Natural killer cell (primary cell): ENCODE measurements at regions of chr3 and their contacts with region 1.

Region 1: DNA sequence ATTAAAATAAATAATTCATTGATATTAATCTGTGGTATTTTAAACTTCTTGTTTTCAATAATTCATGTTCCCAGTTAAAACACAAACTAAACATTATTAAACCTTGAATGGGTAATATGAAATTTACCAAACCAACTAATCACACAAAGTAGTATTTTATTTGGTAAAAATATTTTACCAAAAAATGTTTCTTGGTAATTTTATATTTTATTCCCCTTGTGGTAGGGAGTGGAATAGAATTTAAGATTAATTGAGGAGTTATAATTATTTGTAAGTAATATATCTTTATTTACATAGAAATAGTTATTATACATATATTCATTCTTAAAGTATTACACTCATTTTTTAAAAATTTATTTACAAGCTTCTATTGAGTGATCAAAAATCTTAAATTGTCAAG is 1350.9 kb downstream of the OTOL1 start:
- DNase-seq: no peak
- ATAC-seq: no peak
- H3K4me3 ChIP-seq: no peak overlapping the region
- H3K4me3 Mint-ChIP-seq: no peak overlapping the region
- H3K27ac ChIP-seq: no peak overlapping the region
- H3K27ac Mint-ChIP-seq: no peak overlapping the region
- H3K4me1 ChIP-seq: no peaks in the 10 kb centered on the region
- H3K4me1 Mint-ChIP-seq: no peaks in the 10 kb centered on the region
- H3K27me3 ChIP-seq: no peaks in the 10 kb centered on the region
- H3K27me3 Mint-ChIP-seq: no peaks in the 10 kb centered on the region
- CTCF ChIP-seq: no peak

Region 2: GRCh38 chr3:161475901-161476300 is 1371.6 kb before region 1 on chr3:
- intact Hi-C with region 1: no loop called
- DNase-seq: no peak
- ATAC-seq: no peak
- H3K4me3 ChIP-seq: no peak overlapping the region
- H3K4me3 Mint-ChIP-seq: no peak overlapping the region
- H3K27ac ChIP-seq: no peak overlapping the region
- H3K27ac Mint-ChIP-seq: no peak overlapping the region
- H3K4me1 ChIP-seq: no peaks in the 10 kb centered on the region
- H3K4me1 Mint-ChIP-seq: no peaks in the 10 kb centered on the region
- H3K27me3 ChIP-seq: peaks cover 4% of the 10 kb centered on the region
- H3K27me3 Mint-ChIP-seq: peaks cover 3 to 9% of the 10 kb centered on the region in 2 donors
- CTCF ChIP-seq: no peak

Region 3: DNA sequence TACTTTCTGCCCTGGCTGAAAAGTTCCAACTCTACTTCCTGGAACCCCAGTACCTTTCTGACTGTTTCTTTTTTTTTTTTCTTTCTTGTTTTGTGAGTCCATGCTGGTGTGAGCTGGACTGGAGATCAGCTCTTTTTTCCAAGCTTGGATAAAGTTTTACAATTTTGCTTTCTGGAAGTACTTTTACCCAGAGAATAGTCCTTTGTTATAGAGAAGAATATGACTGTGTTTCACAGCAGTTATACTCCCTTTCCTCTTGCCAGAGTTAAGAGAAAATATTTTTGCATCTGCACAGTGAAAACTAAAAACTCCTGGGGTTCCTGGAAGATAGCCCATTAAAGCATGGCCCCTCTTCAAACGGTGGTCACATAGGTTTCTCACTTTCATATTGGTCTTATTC is 250.3 kb before region 1 on chr3:
- intact Hi-C with region 1: no loop called
- DNase-seq: no peak
- ATAC-seq: no peak
- H3K4me3 ChIP-seq: no peak overlapping the region
- H3K4me3 Mint-ChIP-seq: no peak overlapping the region
- H3K27ac ChIP-seq: no peak overlapping the region
- H3K27ac Mint-ChIP-seq: no peak overlapping the region
- H3K4me1 ChIP-seq: no peaks in the 10 kb centered on the region
- H3K4me1 Mint-ChIP-seq: no peaks in the 10 kb centered on the region
- H3K27me3 ChIP-seq: no peaks in the 10 kb centered on the region
- H3K27me3 Mint-ChIP-seq: no peaks in the 10 kb centered on the region
- CTCF ChIP-seq: no peak

Region 4: DNA sequence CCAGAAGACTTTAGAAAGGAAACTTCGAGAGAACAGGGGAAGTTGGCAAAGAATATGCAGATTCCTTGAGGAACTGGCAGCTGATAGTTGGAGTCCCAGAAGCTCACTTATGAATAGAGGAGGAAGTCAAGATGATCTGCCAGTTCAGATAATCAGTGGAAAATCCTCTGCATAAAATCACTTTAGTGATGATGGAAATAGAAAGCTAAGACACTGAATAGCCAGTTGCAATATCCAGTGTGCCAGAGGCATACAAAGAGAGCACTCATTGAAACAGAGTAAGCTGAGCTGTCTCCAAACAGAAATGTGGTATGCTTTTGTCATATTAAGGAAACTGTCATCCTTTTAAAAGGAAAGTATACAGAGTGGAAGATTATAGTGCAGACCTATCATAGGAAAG is 143.3 kb before region 1 on chr3:
- intact Hi-C with region 1: no loop called
- DNase-seq: no peak
- ATAC-seq: no peak
- H3K4me3 ChIP-seq: no peak overlapping the region
- H3K4me3 Mint-ChIP-seq: no peak overlapping the region
- H3K27ac ChIP-seq: no peak overlapping the region
- H3K27ac Mint-ChIP-seq: no peak overlapping the region
- H3K4me1 ChIP-seq: no peaks in the 10 kb centered on the region
- H3K4me1 Mint-ChIP-seq: no peaks in the 10 kb centered on the region
- H3K27me3 ChIP-seq: no peaks in the 10 kb centered on the region
- H3K27me3 Mint-ChIP-seq: no peaks in the 10 kb centered on the region
- CTCF ChIP-seq: no peak

Region 5: GRCh38 chr3:162780313-162780712 is 67.2 kb before region 1 on chr3:
- intact Hi-C with region 1: loop called (anchors 10 kb)
- DNase-seq: no peak
- ATAC-seq: no peak
- H3K4me3 ChIP-seq: no peak overlapping the region
- H3K4me3 Mint-ChIP-seq: no peak overlapping the region
- H3K27ac ChIP-seq: no peak overlapping the region
- H3K27ac Mint-ChIP-seq: no peak overlapping the region
- H3K4me1 ChIP-seq: no peaks in the 10 kb centered on the region
- H3K4me1 Mint-ChIP-seq: no peaks in the 10 kb centered on the region
- H3K27me3 ChIP-seq: no peaks in the 10 kb centered on the region
- H3K27me3 Mint-ChIP-seq: no peaks in the 10 kb centered on the region
- CTCF ChIP-seq: no peak